ENCODE measurements at regions of chr13 and their contacts with region 1.

Region 1: DNA sequence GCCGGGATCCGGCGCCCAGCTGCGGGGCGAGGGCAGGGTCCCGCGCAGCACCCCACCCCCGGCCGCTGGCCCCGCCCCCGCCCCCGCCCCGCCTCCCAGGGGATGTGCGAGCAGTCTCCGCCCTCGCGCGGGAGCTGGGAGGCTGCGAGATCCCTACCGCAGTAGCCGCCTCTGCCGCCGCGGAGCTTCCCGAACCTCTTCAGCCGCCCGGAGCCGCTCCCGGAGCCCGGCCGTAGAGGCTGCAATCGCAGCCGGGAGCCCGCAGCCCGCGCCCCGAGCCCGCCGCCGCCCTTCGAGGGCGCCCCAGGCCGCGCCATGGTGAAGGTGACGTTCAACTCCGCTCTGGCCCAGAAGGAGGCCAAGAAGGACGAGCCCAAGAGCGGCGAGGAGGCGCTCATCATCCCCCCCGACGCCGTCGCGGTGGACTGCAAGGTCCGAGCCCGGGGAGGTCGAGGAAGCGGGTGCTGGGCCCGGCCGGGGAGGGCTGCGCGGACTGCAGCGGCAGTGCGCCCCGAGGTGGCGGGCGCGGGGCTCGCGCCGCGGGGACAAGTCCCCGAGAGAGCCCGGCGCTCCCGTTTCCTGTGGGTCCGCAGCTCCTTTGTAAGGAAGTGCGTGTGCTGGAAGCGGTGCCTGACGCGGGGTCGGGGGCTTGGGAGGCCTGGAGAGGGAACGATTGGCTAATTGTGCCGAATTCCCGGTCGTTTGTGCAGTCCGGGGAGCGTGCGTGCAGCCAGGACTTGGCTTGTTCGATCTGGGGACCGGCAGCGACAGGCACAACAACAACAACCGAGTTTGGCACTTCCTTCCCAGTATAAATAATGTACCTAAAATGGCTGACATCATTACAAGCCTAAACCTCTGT is at the start of gene ITM2B:
- DNase-seq: peak; percentile 57 to 76 (median 70)
- ATAC-seq: peak; percentile 88
- H3K4me3 ChIP-seq: peak within 1 kb of the TSS; percentile 85
- H3K4me3 Mint-ChIP-seq: peak within 1 kb of the TSS; percentile 90 to 99 (median 97)
- H3K27ac ChIP-seq: peak within 1 kb of the TSS; percentile 94
- H3K27ac Mint-ChIP-seq: peak within 1 kb of the TSS; percentile 90 to 99 (median 98)
- H3K4me1 ChIP-seq: peaks cover 31 to 35% of the 10 kb centered on the region in 2 donors
- H3K4me1 Mint-ChIP-seq: peaks cover 32 to 63% (median 57%) of the 10 kb centered on the region in 7 donors
- H3K27me3 ChIP-seq: no peaks in the 10 kb centered on the region
- H3K27me3 Mint-ChIP-seq: peaks cover 0 to 31% (median 0%) of the 10 kb centered on the region in 5 donors
- total RNA-seq, gene ITM2B: 190 to 733 (median 412) TPM

Region 2: DNA sequence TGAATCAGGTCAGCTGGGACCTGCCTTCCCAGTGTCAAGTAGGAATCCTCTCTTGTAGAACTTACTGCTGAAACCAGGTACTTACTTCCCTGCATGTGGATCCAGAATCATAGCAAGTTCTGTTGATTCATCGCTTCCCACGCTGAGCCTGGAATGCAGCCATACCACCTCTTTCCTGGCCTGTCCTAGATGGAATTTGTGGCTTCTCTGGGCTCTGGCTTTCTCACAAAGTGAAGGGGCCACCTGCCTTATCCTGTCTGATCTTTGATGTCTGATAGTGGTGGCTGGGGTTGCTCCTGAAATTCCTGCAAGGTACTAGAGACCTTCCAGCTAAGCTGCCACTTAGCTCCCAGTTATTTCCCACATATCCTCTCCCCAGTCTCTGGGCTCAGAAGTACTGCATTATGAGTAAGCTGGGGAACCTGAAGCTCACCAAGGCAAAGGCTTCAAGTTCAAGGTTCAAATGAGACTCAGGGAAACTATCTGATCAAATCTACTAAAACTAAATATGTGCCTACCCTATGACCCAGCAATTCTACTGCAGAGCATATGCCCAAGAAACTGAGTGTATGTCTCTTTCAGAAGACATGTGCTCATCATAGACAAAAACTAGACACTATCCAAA is 335.7 kb before region 1 on chr13:
- CTCF ChIA-PET with region 1: no interaction called
- POLR2A ChIA-PET with region 1: no interaction called
- intact Hi-C with region 1: no loop called
- DNase-seq: no peak
- ATAC-seq: no peak
- H3K4me3 ChIP-seq: no peak overlapping the region
- H3K4me3 Mint-ChIP-seq: no peak overlapping the region
- H3K27ac ChIP-seq: no peak overlapping the region
- H3K27ac Mint-ChIP-seq: no peak overlapping the region
- H3K4me1 ChIP-seq: no peaks in the 10 kb centered on the region
- H3K4me1 Mint-ChIP-seq: peaks cover 0 to 9% (median 6%) of the 10 kb centered on the region in 7 donors
- H3K27me3 ChIP-seq: no peaks in the 10 kb centered on the region
- H3K27me3 Mint-ChIP-seq: peaks cover 0 to 3% (median 0%) of the 10 kb centered on the region in 5 donors

Region 3: DNA sequence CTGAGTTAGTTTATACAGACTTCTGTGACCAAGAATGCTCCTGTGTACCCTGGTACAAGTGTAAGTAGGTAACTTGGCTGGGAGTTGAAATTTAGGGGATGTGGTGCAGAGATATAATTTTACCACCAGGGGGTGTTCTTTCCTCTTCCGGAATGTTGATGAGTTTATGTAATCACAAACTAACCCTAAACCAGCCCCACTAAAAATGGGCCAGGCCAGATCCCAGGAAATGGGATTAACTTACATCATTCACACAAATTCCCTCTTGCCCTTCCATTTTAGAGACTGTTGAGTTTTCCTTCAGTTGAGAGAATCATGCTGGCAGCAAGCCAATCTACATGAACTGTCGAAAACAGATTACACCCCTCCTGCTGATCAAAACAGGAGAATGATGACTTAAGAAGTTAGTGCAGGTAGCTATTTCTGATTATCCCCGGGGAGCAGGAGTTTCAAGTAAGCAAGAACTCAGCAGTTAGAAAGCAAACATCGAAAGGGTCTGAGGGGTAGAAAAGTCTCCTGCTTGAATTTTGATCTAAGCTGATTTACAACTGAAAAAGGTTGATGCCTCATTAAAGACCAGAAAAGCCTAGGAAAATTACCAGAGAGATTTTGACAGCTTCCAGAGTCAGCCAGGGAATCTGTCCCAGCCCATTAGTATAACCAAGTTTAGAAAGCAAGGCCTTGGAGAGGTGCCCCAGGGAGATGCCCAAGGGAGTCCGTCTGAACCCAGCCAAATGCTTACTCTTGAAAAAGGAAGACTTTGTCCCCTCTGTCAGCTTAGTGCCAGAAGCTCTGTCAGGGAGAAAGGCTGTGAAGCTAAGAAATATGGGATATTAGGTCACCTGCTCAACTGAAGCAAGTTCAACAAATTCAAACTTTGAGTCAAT is 106.1 kb before region 1 on chr13:
- CTCF ChIA-PET with region 1: interaction called, 22 read pairs
- POLR2A ChIA-PET with region 1: interaction called, 50 read pairs
- intact Hi-C with region 1: loop called (anchors 1 kb)
- DNase-seq: peak in 8 of 9 donors; percentile 20 to 84 (median 80)
- ATAC-seq: peak; percentile 96
- H3K4me3 ChIP-seq: no peak overlapping the region
- H3K4me3 Mint-ChIP-seq: peak overlapping the region in 9 of 10 donors; percentile 25 to 69 (median 52)
- H3K27ac ChIP-seq: peak overlapping the region; percentile 54
- H3K27ac Mint-ChIP-seq: peak overlapping the region in 8 of 9 donors; percentile 83 to 95 (median 89)
- H3K4me1 ChIP-seq: peaks cover 5 to 15% of the 10 kb centered on the region in 2 donors
- H3K4me1 Mint-ChIP-seq: peaks cover 14 to 42% (median 35%) of the 10 kb centered on the region in 7 donors
- H3K27me3 ChIP-seq: no peaks in the 10 kb centered on the region
- H3K27me3 Mint-ChIP-seq: peaks cover 0 to 3% (median 0%) of the 10 kb centered on the region in 5 donors

Region 4: DNA sequence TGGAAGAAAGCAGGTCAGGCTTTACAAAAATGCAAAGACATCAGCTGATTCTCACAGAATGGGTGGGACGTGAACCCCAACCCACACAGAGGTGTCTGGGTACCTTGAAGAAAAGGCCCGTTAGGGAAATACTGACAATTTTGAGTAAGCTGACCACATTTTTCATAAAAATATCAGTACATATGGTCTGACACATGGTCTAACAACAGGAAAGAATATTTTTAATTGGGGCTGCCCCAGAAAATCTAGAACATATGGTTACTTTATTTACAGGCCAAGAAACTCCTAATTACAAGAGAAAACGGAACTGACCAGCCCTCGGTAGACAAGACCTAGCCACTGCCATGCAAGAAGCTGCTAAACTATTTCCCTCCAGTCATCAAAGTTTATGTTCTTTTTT is 49.0 kb before region 1 on chr13:
- CTCF ChIA-PET with region 1: interaction called, 20 read pairs
- POLR2A ChIA-PET with region 1: interaction called, 80 read pairs
- intact Hi-C with region 1: loop called (anchors 1 kb)
- DNase-seq: no peak
- ATAC-seq: no peak
- H3K4me3 ChIP-seq: no peak overlapping the region
- H3K4me3 Mint-ChIP-seq: peak overlapping the region in 9 of 10 donors; percentile 41 to 79 (median 65)
- H3K27ac ChIP-seq: peak overlapping the region; percentile 42
- H3K27ac Mint-ChIP-seq: peak overlapping the region in 8 of 9 donors; percentile 82 to 97 (median 90)
- H3K4me1 ChIP-seq: peaks cover 8 to 58% of the 10 kb centered on the region in 2 donors
- H3K4me1 Mint-ChIP-seq: peaks cover 40 to 81% (median 64%) of the 10 kb centered on the region in 7 donors
- H3K27me3 ChIP-seq: no peaks in the 10 kb centered on the region
- H3K27me3 Mint-ChIP-seq: peaks cover 0 to 10% (median 0%) of the 10 kb centered on the region in 5 donors

Region 5: DNA sequence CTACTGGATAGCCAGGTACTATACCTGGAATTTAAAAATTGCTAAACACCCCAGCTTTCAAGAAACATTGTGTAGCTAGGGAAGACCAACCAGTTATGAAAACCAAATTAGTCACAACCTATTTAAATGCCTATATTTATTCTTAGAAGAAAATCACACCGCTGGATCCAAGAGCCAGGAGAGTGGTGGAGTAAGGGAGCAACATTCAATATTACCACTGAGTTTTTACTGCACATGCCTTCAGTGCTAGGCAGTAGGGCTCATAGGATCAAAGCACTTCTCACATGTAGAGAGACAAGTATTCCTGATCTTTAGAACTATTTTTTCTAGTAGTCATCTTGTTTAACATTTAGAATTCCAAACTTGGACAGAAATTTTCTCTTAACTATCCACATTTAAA is 10.9 kb after region 1 on chr13:
- CTCF ChIA-PET with region 1: no interaction called
- POLR2A ChIA-PET with region 1: interaction called, 10 read pairs
- intact Hi-C with region 1: loop called in 1 of 2 experiments (anchors 1 kb)
- DNase-seq: no peak
- ATAC-seq: no peak
- H3K4me3 ChIP-seq: no peak overlapping the region
- H3K4me3 Mint-ChIP-seq: peak overlapping the region in 6 of 10 donors; percentile 7 to 46 (median 26)
- H3K27ac ChIP-seq: peak overlapping the region; percentile 5
- H3K27ac Mint-ChIP-seq: peak overlapping the region in 5 of 9 donors; percentile 9 to 72 (median 60)
- H3K4me1 ChIP-seq: peaks cover 30 to 31% of the 10 kb centered on the region in 2 donors
- H3K4me1 Mint-ChIP-seq: peaks cover 16 to 87% (median 65%) of the 10 kb centered on the region in 7 donors
- H3K27me3 ChIP-seq: no peaks in the 10 kb centered on the region
- H3K27me3 Mint-ChIP-seq: no peaks in the 10 kb centered on the region

Region 6: GRCh38 chr13:48400850-48401291 is 167.6 kb after region 1 on chr13:
- CTCF ChIA-PET with region 1: no interaction called
- POLR2A ChIA-PET with region 1: no interaction called
- intact Hi-C with region 1: loop called in 1 of 2 experiments (anchors 5 kb)
- DNase-seq: peak in 2 of 9 donors; percentile 36 to 42
- ATAC-seq: peak; percentile 74
- H3K4me3 ChIP-seq: no peak overlapping the region
- H3K4me3 Mint-ChIP-seq: peak overlapping the region; percentile 1 to 83 (median 54)
- H3K27ac ChIP-seq: peak overlapping the region; percentile 49
- H3K27ac Mint-ChIP-seq: peak overlapping the region; percentile 1 to 90 (median 50)
- H3K4me1 ChIP-seq: peaks cover 33 to 40% of the 10 kb centered on the region in 2 donors
- H3K4me1 Mint-ChIP-seq: peaks cover 23 to 78% (median 63%) of the 10 kb centered on the region in 7 donors
- H3K27me3 ChIP-seq: no peaks in the 10 kb centered on the region
- H3K27me3 Mint-ChIP-seq: no peaks in the 10 kb centered on the region

Region 7: GRCh38 chr13:48769107-48769704 is 535.9 kb after region 1 on chr13:
- CTCF ChIA-PET with region 1: no interaction called
- POLR2A ChIA-PET with region 1: no interaction called
- intact Hi-C with region 1: loop called in 1 of 2 experiments (anchors 2 kb)
- DNase-seq: peak; percentile 44 to 87 (median 82)
- ATAC-seq: peak; percentile 100
- H3K4me3 ChIP-seq: no peak overlapping the region
- H3K4me3 Mint-ChIP-seq: peak overlapping the region in 1 of 10 donors; percentile 4
- H3K27ac ChIP-seq: no peak overlapping the region
- H3K27ac Mint-ChIP-seq: peak overlapping the region in 1 of 9 donors; percentile 0
- H3K4me1 ChIP-seq: no peaks in the 10 kb centered on the region
- H3K4me1 Mint-ChIP-seq: peaks cover 0 to 16% (median 5%) of the 10 kb centered on the region in 7 donors
- H3K27me3 ChIP-seq: no peaks in the 10 kb centered on the region
- H3K27me3 Mint-ChIP-seq: peaks cover 4 to 46% (median 17%) of the 10 kb centered on the region in 5 donors